Endothelial cell of umbilical vein (primary cell): ENCODE measurements at regions of chr3 and their contacts with region 1.

Region 1: DNA sequence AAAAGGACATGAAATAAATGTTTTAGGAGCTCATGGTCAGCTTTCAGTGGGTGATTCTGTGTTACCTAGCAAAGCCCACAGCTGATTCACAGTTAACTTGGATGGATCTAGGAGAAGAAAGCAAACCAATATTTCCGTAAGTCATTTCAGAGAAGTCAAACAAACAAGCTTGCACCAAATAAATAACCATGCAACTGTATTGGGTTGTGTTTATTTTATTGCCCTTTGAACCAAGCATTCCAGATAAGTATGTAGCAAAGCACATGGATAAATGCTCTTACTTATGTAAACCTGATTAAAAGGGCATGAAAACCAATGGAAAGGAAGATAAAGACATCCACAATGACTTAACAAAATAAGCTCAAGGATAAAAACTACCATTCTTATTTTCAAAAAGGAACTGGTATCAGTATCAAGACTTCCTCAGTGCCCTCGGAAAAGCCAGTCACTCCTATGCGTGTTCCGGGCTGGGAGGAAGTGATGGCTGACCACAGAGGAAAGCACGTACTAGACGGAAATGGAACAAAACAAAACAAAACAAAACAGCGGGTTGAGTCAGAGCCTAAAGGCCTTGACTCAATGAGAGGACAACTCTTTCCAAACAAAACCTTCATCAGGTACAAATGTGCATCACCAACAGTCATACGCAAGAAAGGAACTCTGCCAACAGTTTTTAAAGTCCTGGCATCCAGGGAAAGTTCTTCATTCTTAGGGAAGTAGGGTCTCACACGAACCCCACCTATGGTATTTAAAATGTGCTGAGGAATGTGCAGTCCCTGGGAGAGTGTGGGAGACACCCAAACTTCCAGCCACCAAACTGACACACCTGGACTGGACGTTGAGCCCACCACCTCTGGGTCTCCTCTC is 103.3 kb downstream of the SNRK start:
- DNase-seq: peak; percentile 97
- H3K4me3 ChIP-seq: no peak overlapping the region
- H3K27ac ChIP-seq: peak overlapping the region; percentile 97
- H3K4me1 ChIP-seq: peaks cover 68% of the 10 kb centered on the region
- H3K27me3 ChIP-seq: no peaks in the 10 kb centered on the region
- CTCF ChIP-seq: no peak
- POLR2A ChIP-seq: peak; percentile 90

Region 2: GRCh38 chr3:43071313-43071893 is 318.2 kb before region 1 on chr3:
- CTCF ChIA-PET with region 1: no interaction called
- POLR2A ChIA-PET with region 1: no interaction called
- dilution Hi-C with region 1: no loop called
- intact Hi-C with region 1: no loop called
- DNase-seq: no peak
- H3K4me3 ChIP-seq: no peak overlapping the region
- H3K27ac ChIP-seq: no peak overlapping the region
- H3K4me1 ChIP-seq: no peaks in the 10 kb centered on the region
- H3K27me3 ChIP-seq: peaks cover 0 to 2% of the 10 kb centered on the region in 2 experiments
- CTCF ChIP-seq: peak; percentile 39 to 46
- POLR2A ChIP-seq: no peak

Region 3: DNA sequence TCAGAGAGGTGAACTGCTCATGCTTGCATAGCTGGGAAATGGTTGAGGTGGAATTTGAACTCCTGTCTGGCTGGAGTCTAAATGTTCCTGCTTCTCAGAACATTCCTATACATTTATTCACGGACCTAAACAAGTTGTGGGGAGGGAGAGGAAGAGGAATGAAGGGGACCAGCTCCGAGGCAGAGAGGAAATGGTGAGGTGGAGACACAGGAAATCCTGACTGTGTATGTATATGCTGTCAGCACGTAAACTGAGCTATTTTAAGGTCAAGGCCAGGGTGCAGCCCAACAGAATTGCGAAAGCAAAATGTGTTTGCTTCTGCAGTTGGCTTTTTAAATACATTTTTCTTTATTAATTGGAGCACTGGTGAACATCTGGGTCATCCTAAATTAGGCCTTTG is 209.6 kb before region 1 on chr3:
- CTCF ChIA-PET with region 1: interaction called, 5 read pairs
- POLR2A ChIA-PET with region 1: interaction called, 3 read pairs
- dilution Hi-C with region 1: loop called (anchors 25 kb)
- intact Hi-C with region 1: loop called (anchors 1 kb)
- DNase-seq: peak; percentile 96
- H3K4me3 ChIP-seq: no peak overlapping the region
- H3K27ac ChIP-seq: peak overlapping the region; percentile 89
- H3K4me1 ChIP-seq: peaks cover 47% of the 10 kb centered on the region
- H3K27me3 ChIP-seq: no peaks in the 10 kb centered on the region
- CTCF ChIP-seq: no peak
- POLR2A ChIP-seq: no peak

Region 4: GRCh38 chr3:43286115-43286840 is 103.3 kb before region 1 on chr3 and contains the start of gene SNRK:
- CTCF ChIA-PET with region 1: interaction called, 6 read pairs
- POLR2A ChIA-PET with region 1: interaction called, 8 read pairs
- dilution Hi-C with region 1: no loop called
- intact Hi-C with region 1: loop called (anchors 1 kb)
- DNase-seq: peak; percentile 99
- H3K4me3 ChIP-seq: peak within 1 kb of the TSS; percentile 60 to 100 (median 99)
- H3K27ac ChIP-seq: peak within 1 kb of the TSS; percentile 100
- H3K4me1 ChIP-seq: peaks cover 43% of the 10 kb centered on the region
- H3K27me3 ChIP-seq: no peaks in the 10 kb centered on the region
- CTCF ChIP-seq: peak; percentile 32 to 42
- POLR2A ChIP-seq: peak; percentile 87
- total RNA-seq, gene SNRK: 99.9 and 108 TPM in 2 replicates

Region 5: GRCh38 chr3:43405888-43406642 is 16.4 kb after region 1 on chr3:
- CTCF ChIA-PET with region 1: interaction called, 10 read pairs
- POLR2A ChIA-PET with region 1: no interaction called
- dilution Hi-C with region 1: no loop called
- intact Hi-C with region 1: no loop called
- DNase-seq: no peak
- H3K4me3 ChIP-seq: no peak overlapping the region
- H3K27ac ChIP-seq: no peak overlapping the region
- H3K4me1 ChIP-seq: no peaks in the 10 kb centered on the region
- H3K27me3 ChIP-seq: no peaks in the 10 kb centered on the region
- CTCF ChIP-seq: no peak
- POLR2A ChIP-seq: no peak

Region 6: DNA sequence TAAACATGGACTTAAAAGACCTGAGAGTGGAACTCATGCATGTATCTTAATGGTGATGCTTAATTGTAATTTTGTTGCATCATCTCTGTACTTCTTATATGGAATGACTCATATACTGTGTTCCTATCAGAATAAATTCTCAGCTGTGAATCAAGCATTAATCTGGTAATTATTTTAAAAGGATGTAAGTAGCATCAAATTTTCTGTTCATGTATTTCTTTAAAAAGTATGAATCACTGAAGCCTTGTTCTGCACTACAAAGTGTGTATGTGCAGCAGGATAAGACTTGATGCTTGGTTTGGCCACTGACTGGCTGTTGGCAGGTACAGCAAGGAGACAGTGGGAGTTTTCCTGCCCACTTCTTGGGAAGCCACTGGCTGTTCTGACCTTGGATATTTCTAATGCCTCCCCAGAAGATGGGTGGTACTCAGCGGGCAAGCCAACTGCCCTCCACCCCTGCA is 108.3 kb after region 1 on chr3:
- CTCF ChIA-PET with region 1: interaction called, 56 read pairs
- POLR2A ChIA-PET with region 1: interaction called, 7 read pairs
- dilution Hi-C with region 1: no loop called
- intact Hi-C with region 1: loop called (anchors 1 kb)
- DNase-seq: peak; percentile 51
- H3K4me3 ChIP-seq: no peak overlapping the region
- H3K27ac ChIP-seq: peak overlapping the region; percentile 91
- H3K4me1 ChIP-seq: peaks cover 56% of the 10 kb centered on the region
- H3K27me3 ChIP-seq: no peaks in the 10 kb centered on the region
- CTCF ChIP-seq: no peak
- POLR2A ChIP-seq: no peak

Region 7: DNA sequence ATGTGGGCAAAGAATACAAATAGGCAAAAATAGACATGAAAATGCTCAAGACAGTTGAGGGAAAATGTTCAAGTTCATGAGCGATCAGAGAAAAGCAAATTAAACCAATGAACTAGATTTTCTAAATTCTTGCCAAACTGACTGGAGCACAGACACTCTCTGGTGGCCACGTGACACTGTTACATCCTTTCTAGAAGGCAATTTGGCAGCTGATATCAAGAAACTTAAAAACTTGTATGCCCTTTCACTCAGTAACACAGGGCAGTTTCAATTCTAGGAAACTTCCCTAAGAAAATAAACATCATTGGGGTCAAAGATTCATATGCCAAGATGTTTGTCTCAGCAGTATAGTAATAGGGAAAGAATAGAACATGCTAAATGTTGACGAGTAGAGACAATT is 353.3 kb after region 1 on chr3:
- CTCF ChIA-PET with region 1: no interaction called
- POLR2A ChIA-PET with region 1: no interaction called
- dilution Hi-C with region 1: no loop called
- intact Hi-C with region 1: loop called (anchors 1 kb)
- DNase-seq: peak; percentile 92
- H3K4me3 ChIP-seq: no peak overlapping the region
- H3K27ac ChIP-seq: peak overlapping the region; percentile 43
- H3K4me1 ChIP-seq: peaks cover 21% of the 10 kb centered on the region
- H3K27me3 ChIP-seq: no peaks in the 10 kb centered on the region
- CTCF ChIP-seq: no peak
- POLR2A ChIP-seq: no peak